CD14-positive monocyte (primary cell): ENCODE measurements at regions of chr20 and their contacts with region 1.

Region 1: DNA sequence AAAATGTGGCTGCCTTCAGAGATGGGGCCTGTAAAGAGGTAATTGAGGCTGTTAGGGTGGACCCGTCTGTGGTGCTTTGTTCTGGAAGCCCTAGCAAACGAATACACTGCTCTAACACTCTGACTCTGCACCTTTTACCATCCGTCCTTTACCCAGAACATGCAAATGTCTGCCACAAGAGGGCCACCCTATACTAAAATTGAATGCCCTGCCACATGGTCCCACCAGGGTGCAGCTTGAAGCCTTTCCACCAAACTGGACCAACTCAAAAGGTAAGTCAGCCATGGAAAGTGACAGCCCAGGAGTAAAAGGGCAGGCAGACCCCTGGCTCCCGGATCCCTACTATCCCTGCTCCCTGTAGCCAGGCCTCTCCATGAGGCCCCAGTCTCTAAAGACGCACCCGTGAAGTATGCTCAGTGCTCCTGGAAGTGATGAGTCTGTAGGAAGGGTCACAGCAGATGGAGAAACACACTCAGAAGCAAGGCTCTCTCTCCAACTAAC is 5.8 kb upstream of the BFSP1 start:
- DNase-seq: peak; percentile 24 to 54 (median 26)
- H3K4me3 ChIP-seq: no peak overlapping the region
- H3K4me3 Mint-ChIP-seq: no peak overlapping the region
- H3K27ac ChIP-seq: no peak overlapping the region
- H3K27ac Mint-ChIP-seq: peak overlapping the region in 1 of 7 donors; percentile 35
- H3K4me1 ChIP-seq: peaks cover 0 to 3% of the 10 kb centered on the region in 2 donors
- H3K4me1 Mint-ChIP-seq: peaks cover 5% of the 10 kb centered on the region
- H3K27me3 ChIP-seq: no peaks in the 10 kb centered on the region
- H3K27me3 Mint-ChIP-seq: peaks cover 3 to 12% (median 6%) of the 10 kb centered on the region in 3 donors
- CTCF ChIP-seq: peak; percentile 77

Region 2: GRCh38 chr20:17518339-17519052 is 18.5 kb before region 1 on chr20:
- intact Hi-C with region 1: no loop called
- DNase-seq: peak; percentile 7 to 81 (median 18)
- H3K4me3 ChIP-seq: no peak overlapping the region
- H3K4me3 Mint-ChIP-seq: peak overlapping the region in 1 of 2 donors; percentile 51
- H3K27ac ChIP-seq: no peak overlapping the region
- H3K27ac Mint-ChIP-seq: peak overlapping the region in 2 of 7 donors; percentile 15 to 76
- H3K4me1 ChIP-seq: peaks cover 12 to 14% of the 10 kb centered on the region in 2 donors
- H3K4me1 Mint-ChIP-seq: peaks cover 14% of the 10 kb centered on the region
- H3K27me3 ChIP-seq: no peaks in the 10 kb centered on the region
- H3K27me3 Mint-ChIP-seq: peaks cover 5 to 11% (median 10%) of the 10 kb centered on the region in 3 donors
- CTCF ChIP-seq: no peak

Region 3: GRCh38 chr20:17569616-17570346 is 32.8 kb after region 1 on chr20 and contains the start of gene DSTN:
- intact Hi-C with region 1: loop called in 1 of 2 experiments (anchors 2 kb)
- DNase-seq: peak; percentile 76 to 83 (median 82)
- H3K4me3 ChIP-seq: peak within 1 kb of the TSS; percentile 74 to 95 (median 81)
- H3K4me3 Mint-ChIP-seq: peak within 1 kb of the TSS; percentile 88 to 94
- H3K27ac ChIP-seq: peak within 1 kb of the TSS in 1 of 2 donors; percentile 52
- H3K27ac Mint-ChIP-seq: peak within 1 kb of the TSS; percentile 74 to 93 (median 89)
- H3K4me1 ChIP-seq: peaks cover 13 to 20% of the 10 kb centered on the region in 2 donors
- H3K4me1 Mint-ChIP-seq: peaks cover 13% of the 10 kb centered on the region
- H3K27me3 ChIP-seq: peaks cover 11 to 15% of the 10 kb centered on the region in 2 donors
- H3K27me3 Mint-ChIP-seq: peaks cover 23 to 32% (median 26%) of the 10 kb centered on the region in 3 donors
- CTCF ChIP-seq: no peak
- polyA plus RNA-seq, gene DSTN: 15.6 to 63.8 (median 58.4) TPM

Region 4: GRCh38 chr20:17611540-17612286 is 74.7 kb after region 1 on chr20:
- intact Hi-C with region 1: loop called (anchors 2 kb)
- DNase-seq: peak in 1 of 3 donors; percentile 2
- H3K4me3 ChIP-seq: no peak overlapping the region
- H3K4me3 Mint-ChIP-seq: no peak overlapping the region
- H3K27ac ChIP-seq: no peak overlapping the region
- H3K27ac Mint-ChIP-seq: peak overlapping the region in 1 of 7 donors; percentile 65
- H3K4me1 ChIP-seq: peaks cover 12 to 17% of the 10 kb centered on the region in 2 donors
- H3K4me1 Mint-ChIP-seq: peaks cover 15% of the 10 kb centered on the region
- H3K27me3 ChIP-seq: no peaks in the 10 kb centered on the region
- H3K27me3 Mint-ChIP-seq: no peaks in the 10 kb centered on the region
- CTCF ChIP-seq: peak; percentile 12

Region 5: DNA sequence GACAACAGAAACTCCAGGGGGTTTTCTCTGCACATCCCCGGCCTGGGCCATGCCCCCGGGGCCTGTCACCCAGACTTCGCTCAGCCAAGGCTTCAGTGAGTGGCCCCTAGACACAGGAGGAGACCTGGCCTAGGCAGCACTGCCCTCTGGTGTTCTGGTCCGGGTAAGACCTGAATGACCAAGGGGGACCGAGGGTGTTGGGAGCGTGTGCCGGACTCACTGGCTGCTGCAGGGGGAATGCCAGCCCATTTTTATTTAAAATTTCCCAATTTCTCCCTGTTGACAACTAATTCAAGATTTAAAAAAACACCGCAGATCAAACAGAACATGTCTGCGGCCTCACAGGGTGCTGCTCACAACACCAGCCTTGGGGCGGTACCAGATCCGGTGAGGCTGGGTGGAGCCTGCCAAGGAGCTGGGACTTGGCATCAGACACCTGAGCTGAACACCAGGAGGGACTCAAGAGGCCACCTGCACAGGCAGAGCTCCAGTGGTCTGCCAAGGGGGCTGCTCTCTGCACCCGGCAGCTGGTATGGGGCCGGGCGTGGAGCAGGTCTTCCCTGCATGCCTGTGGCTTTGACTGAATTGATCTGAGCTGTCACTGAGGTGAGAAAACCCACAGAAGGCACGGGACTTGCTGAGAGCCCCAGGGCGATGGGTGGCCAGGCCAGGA is 80.7 kb after region 1 on chr20:
- intact Hi-C with region 1: loop called in 1 of 2 experiments (anchors 2 kb)
- DNase-seq: no peak
- H3K4me3 ChIP-seq: no peak overlapping the region
- H3K4me3 Mint-ChIP-seq: no peak overlapping the region
- H3K27ac ChIP-seq: no peak overlapping the region
- H3K27ac Mint-ChIP-seq: no peak overlapping the region
- H3K4me1 ChIP-seq: peaks cover 12 to 17% of the 10 kb centered on the region in 2 donors
- H3K4me1 Mint-ChIP-seq: peaks cover 10% of the 10 kb centered on the region
- H3K27me3 ChIP-seq: no peaks in the 10 kb centered on the region
- H3K27me3 Mint-ChIP-seq: no peaks in the 10 kb centered on the region
- CTCF ChIP-seq: peak; percentile 60

Region 6: DNA sequence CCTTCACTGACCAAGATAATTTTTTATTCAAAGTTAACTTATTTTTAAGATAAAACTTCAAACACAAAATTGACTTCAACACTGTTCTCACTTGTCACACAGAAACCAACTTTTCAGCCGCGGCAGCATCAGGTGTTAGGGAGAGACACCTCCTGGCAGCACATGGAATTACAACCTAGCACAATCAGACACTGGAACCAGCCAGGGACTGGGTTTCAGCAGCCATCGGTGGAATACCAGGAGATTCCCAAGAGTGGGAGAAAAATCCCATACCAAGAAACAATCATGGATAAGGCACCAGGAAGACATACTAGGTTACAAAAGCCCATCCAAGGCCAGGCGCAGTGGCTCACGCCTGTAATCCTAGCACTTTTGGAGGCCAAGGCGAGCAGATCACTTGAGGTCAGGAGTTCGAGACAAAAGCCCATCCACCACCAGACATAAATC is 361.6 kb after region 1 on chr20:
- intact Hi-C with region 1: loop called in 1 of 2 experiments (anchors 10 kb)
- DNase-seq: peak; percentile 30 to 61 (median 45)
- H3K4me3 ChIP-seq: no peak overlapping the region
- H3K4me3 Mint-ChIP-seq: no peak overlapping the region
- H3K27ac ChIP-seq: no peak overlapping the region
- H3K27ac Mint-ChIP-seq: no peak overlapping the region
- H3K4me1 ChIP-seq: peaks cover 13 to 15% of the 10 kb centered on the region in 2 donors
- H3K4me1 Mint-ChIP-seq: peaks cover 22% of the 10 kb centered on the region
- H3K27me3 ChIP-seq: peaks cover 18 to 20% of the 10 kb centered on the region in 2 donors
- H3K27me3 Mint-ChIP-seq: peaks cover 15 to 32% (median 16%) of the 10 kb centered on the region in 3 donors
- CTCF ChIP-seq: peak; percentile 94